ENCODE measurements at regions of chr15 and their contacts with region 1.

Region 1: GRCh38 chr15:83930392-83931205 is 276.7 kb downstream of the ADAMTSL3 start:
- DNase-seq: no peak
- ATAC-seq: peak; percentile 85
- H3K4me3 ChIP-seq: no peak overlapping the region
- H3K27ac ChIP-seq: peak overlapping the region; percentile 70 to 81
- H3K4me1 ChIP-seq: peaks cover 0 to 2% of the 10 kb centered on the region in 2 donors
- H3K27me3 ChIP-seq: no peaks in the 10 kb centered on the region

Region 2: GRCh38 chr15:83992324-83993031 is 61.9 kb after region 1 on chr15:
- intact Hi-C with region 1: loop called in 1 of 2 experiments (anchors 5 kb)
- DNase-seq: no peak
- ATAC-seq: no peak
- H3K4me3 ChIP-seq: no peak overlapping the region
- H3K27ac ChIP-seq: peak overlapping the region; percentile 0 to 99
- H3K4me1 ChIP-seq: peaks cover 13 to 16% of the 10 kb centered on the region in 2 donors
- H3K27me3 ChIP-seq: no peaks in the 10 kb centered on the region